Activated CD4-positive, alpha-beta T cell treated with anti-CD3 and anti-CD28 coated beads, Interleukin-2, amount 10 ng/mL, durations not matched to agents 24 days and 14 days (primary cell): ENCODE measurements at regions of chr1 and their contacts with region 1.

Region 1: DNA sequence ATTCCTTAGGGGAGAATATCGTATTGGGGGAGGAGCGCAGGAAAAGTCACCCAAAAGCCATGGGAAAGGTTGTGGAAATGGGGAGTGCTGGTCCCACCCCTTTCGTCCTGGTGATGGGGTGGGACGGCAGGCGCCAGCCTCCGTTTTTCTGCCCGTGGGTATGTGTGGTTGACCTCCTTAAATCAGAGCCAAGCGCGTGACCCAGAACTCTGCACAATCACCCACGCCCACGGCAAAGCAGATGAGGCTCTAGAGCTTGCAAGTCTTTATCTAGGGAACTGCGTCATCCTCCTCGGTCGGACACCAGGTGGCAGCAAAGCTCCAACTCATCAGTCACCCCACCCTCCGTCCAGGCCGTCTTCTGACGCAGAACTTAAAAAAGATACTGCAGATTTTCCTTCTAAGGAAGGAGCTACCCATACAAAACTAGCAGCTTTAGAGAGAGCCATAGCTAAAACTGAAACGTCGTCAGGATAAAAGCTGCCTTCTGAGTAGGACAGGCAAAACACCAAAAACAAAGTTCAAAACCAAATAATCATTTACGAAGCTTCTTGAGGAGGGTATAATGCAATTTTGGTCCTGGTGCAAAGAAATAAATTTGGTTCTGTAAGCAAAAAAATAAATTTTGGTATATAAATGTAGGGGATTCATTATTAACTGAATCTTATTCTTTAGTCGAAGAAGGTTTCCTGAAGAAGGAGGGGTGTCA is 62.0 kb downstream of the TBX19 start:
- DNase-seq: peak; percentile 95
- H3K4me3 Mint-ChIP-seq: peak overlapping the region; percentile 35
- H3K27ac Mint-ChIP-seq: peak overlapping the region; percentile 57
- H3K4me1 Mint-ChIP-seq: peaks cover 38% of the 10 kb centered on the region
- H3K27me3 Mint-ChIP-seq: no peaks in the 10 kb centered on the region

Region 2: GRCh38 chr1:168178638-168179437 is 163.9 kb before region 1 on chr1 and contains the start of gene TIPRL:
- intact Hi-C with region 1: loop called (anchors 1 kb)
- DNase-seq: peak; percentile 98
- H3K4me3 Mint-ChIP-seq: no peak within 1 kb of the TSS
- H3K27ac Mint-ChIP-seq: no peak within 1 kb of the TSS
- H3K4me1 Mint-ChIP-seq: peaks cover 8% of the 10 kb centered on the region
- H3K27me3 Mint-ChIP-seq: peaks cover 6% of the 10 kb centered on the region
- total RNA-seq, gene TIPRL: 46.8 and 49.2 TPM in 2 replicates

Region 3: DNA sequence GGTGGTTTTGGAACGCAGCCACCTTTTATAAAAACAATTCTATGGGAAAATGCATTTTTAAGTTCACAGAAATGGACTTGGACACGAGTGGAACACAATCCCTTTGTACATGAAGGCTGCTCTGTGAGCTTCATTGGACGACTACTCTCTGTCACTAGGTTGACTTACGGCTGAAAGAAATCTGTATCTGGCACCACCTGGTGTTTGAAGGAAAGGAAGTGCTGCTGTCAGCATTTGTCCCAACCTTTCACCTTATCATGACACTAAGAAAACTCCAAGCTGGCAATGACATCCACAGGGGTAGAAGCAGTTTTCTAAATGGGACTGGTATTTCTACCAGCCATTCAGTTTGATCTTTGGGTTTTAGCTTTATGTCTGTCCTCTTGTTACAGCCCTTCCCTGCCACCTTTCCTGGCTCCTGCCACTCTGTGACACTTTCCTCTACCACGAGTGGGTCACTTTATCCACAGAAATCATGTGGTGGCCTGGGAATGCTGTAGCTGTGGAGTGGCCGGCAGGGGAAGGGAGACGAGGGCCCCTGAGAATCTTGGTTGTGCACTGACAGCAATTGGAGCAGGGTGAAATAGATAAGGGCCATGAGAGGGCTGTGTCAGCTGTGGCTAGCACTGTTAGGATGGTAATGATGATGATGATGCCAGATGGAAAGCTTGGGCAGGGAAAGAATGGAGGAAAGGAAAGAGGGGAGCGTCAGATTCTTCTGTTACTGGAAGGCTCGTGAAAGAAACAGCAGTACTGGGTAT is 23.2 kb after region 1 on chr1:
- intact Hi-C with region 1: loop called (anchors 1 kb)
- DNase-seq: peak; percentile 70
- H3K4me3 Mint-ChIP-seq: no peak overlapping the region
- H3K27ac Mint-ChIP-seq: no peak overlapping the region
- H3K4me1 Mint-ChIP-seq: peaks cover 19% of the 10 kb centered on the region
- H3K27me3 Mint-ChIP-seq: peaks cover 13% of the 10 kb centered on the region

Region 4: GRCh38 chr1:168439456-168440375 is 97.0 kb after region 1 on chr1:
- intact Hi-C with region 1: loop called (anchors 1 kb)
- DNase-seq: peak; percentile 95
- H3K4me3 Mint-ChIP-seq: peak overlapping the region; percentile 79
- H3K27ac Mint-ChIP-seq: peak overlapping the region; percentile 45
- H3K4me1 Mint-ChIP-seq: peaks cover 49% of the 10 kb centered on the region
- H3K27me3 Mint-ChIP-seq: peaks cover under 1% of the 10 kb centered on the region

Region 5: GRCh38 chr1:168572633-168573032 is 229.9 kb after region 1 on chr1:
- intact Hi-C with region 1: loop called (anchors 2 kb)
- DNase-seq: no peak
- H3K4me3 Mint-ChIP-seq: no peak overlapping the region
- H3K27ac Mint-ChIP-seq: no peak overlapping the region
- H3K4me1 Mint-ChIP-seq: peaks cover 21% of the 10 kb centered on the region
- H3K27me3 Mint-ChIP-seq: peaks cover 21% of the 10 kb centered on the region

Region 6: DNA sequence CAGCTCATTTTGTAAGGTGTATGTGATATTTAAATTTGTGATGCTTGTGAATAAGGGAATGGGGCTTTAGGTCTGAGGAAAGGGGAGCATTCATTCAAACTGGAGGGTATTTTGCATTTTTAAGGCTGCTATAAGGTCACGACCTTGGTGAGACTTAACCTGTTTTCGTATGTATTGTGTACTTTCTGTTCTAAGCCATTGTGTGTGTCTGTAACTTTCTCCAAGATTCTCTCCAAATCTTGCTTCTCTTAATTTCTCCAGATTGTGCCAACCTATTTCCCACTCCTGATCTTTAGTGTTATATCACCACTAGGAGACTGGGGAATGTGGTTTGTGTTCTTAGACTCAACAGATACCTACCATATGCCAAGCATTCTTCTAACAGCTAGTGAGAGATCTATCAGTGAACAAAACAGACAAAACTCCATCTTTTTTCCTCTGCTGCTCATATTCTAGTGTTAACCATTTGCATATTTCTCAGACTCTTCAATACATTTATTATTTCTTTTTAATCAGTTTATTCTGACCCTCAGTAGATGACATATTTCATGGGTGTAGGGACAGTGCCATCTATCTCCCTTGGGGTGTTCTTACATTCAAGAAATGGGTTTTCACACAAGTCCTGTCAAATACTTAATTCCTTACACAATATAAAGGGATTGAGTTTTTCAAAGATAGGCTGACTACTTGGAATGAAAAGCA is 791.2 kb after region 1 on chr1:
- intact Hi-C with region 1: loop called (anchors 10 kb)
- DNase-seq: no peak
- H3K4me3 Mint-ChIP-seq: no peak overlapping the region
- H3K27ac Mint-ChIP-seq: no peak overlapping the region
- H3K4me1 Mint-ChIP-seq: peaks cover 9% of the 10 kb centered on the region
- H3K27me3 Mint-ChIP-seq: no peaks in the 10 kb centered on the region

Region 7: GRCh38 chr1:169546087-169546995 is 1203.6 kb after region 1 on chr1:
- intact Hi-C with region 1: loop called (anchors 5 kb)
- DNase-seq: peak; percentile 90
- H3K4me3 Mint-ChIP-seq: no peak overlapping the region
- H3K27ac Mint-ChIP-seq: no peak overlapping the region
- H3K4me1 Mint-ChIP-seq: peaks cover 19% of the 10 kb centered on the region
- H3K27me3 Mint-ChIP-seq: no peaks in the 10 kb centered on the region